ENCODE measurements at regions of chr15 and their contacts with region 1.

Region 1: DNA sequence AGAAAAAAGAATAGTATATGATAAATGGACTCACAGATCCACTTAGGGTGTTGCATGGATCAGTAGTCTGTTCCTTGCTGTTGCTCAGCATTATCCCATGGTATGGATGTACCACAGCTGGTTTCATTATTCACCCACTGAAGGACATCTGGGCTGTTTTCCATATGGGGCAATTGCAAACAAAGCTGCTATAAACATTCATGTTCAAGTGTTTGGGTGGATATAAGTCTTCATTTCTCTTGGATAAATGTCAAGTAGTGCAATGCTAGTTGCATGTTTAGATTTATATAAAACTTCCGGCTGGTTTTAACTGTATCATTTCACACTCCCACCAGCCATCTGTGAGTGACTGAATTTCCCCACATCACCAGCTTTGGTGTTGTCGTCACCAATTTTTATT is 137.7 kb downstream of the ASB7 start:
- DNase-seq: no peak
- ATAC-seq: no peak
- H3K4me3 ChIP-seq: no peak overlapping the region
- H3K27ac ChIP-seq: no peak overlapping the region
- H3K4me1 ChIP-seq: no peaks in the 10 kb centered on the region
- H3K27me3 ChIP-seq: no peaks in the 10 kb centered on the region
- CTCF ChIP-seq: no peak
- POLR2A ChIP-seq: no peak

Region 2: GRCh38 chr15:100694381-100695021 is 45.6 kb before region 1 on chr15:
- intact Hi-C with region 1: loop called in 1 of 10 experiments (anchors 5 kb)
- DNase-seq: no peak
- ATAC-seq: peak in 3 of 4 donors; percentile 29 to 46 (median 30)
- H3K4me3 ChIP-seq: no peak overlapping the region
- H3K27ac ChIP-seq: peak overlapping the region in 8 of 12 donors; percentile 9 to 80 (median 28)
- H3K4me1 ChIP-seq: peaks cover 0 to 14% (median 0%) of the 10 kb centered on the region in 12 donors
- H3K27me3 ChIP-seq: peaks cover 0 to 4% (median 0%) of the 10 kb centered on the region in 9 donors
- CTCF ChIP-seq: no peak
- POLR2A ChIP-seq: no peak

Region 3: DNA sequence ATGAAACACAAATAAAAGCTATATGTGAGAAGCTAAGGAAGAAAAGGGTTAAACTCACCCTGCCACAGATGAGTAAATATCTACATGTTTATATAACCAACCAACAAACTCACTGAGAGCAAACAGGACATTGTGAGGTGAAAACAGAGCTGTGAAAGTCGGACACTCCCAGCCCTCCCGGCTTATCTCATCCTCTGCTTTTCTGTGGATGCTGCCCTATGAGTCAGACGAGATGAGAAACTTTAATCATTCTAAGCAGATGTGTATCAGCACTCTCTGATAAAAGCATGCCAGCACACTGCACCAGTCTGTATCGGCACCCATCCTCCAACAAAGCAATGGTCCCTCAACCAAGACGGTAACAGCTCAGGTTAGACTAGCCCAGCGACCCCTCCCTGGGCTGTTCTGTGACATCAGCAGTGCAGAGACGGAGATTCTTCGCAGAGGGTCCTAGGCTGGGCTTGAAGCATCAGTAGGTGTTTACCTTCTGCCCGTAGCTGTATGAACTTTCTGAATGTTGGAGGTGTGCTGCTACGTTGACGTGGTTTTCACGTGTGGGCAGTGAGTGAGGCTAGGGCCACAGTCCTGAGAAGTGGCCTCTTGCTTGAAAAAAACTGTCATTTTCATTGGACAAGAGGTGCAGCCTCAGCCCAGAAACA is 19.7 kb after region 1 on chr15:
- intact Hi-C with region 1: no loop called
- DNase-seq: no peak
- ATAC-seq: peak in 2 of 4 donors; percentile 38 to 42
- H3K4me3 ChIP-seq: no peak overlapping the region
- H3K27ac ChIP-seq: no peak overlapping the region
- H3K4me1 ChIP-seq: peaks cover 0 to 13% (median 0%) of the 10 kb centered on the region in 12 donors
- H3K27me3 ChIP-seq: peaks cover 0 to 24% (median 3%) of the 10 kb centered on the region in 9 donors
- CTCF ChIP-seq: no peak
- POLR2A ChIP-seq: no peak

Region 4: DNA sequence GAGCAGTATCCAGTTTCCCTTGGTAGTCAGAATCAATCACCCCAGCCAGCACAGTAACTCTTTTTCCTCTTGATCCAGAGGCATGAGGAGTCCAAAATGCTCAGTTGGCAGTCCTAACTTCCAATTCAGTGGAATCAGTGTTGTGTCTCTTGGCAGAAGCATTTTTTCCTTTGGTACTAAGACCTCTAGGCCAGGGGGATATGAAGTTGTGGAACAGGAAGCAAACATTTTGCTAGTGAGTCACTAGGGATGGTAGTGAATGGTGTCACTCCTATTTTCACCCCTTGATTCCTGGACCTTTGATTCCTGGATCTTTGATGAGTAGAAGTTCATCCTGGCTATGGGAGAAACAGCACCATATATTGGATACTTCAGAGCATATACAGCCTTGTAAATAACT is 69.0 kb after region 1 on chr15:
- intact Hi-C with region 1: loop called in 1 of 10 experiments (anchors 10 kb)
- DNase-seq: no peak
- ATAC-seq: no peak
- H3K4me3 ChIP-seq: no peak overlapping the region
- H3K27ac ChIP-seq: no peak overlapping the region
- H3K4me1 ChIP-seq: no peaks in the 10 kb centered on the region
- H3K27me3 ChIP-seq: no peaks in the 10 kb centered on the region
- CTCF ChIP-seq: no peak
- POLR2A ChIP-seq: no peak